Activated CD8-positive, alpha-beta T cell treated with anti-CD3 and anti-CD28 coated beads for 36 hours (primary cell): ENCODE measurements at regions of chr10 and their contacts with region 1.

Region 1: GRCh38 chr10:110746254-110746826 is 102.2 kb downstream of the RBM20 start:
- DNase-seq: peak; percentile 67
- ATAC-seq: peak; percentile 32
- H3K4me3 Mint-ChIP-seq: no peak overlapping the region
- H3K27ac Mint-ChIP-seq: peak overlapping the region; percentile 86
- H3K4me1 Mint-ChIP-seq: peaks cover 74% of the 10 kb centered on the region
- H3K27me3 Mint-ChIP-seq: no peaks in the 10 kb centered on the region
- CTCF ChIP-seq: peak; percentile 97

Region 2: DNA sequence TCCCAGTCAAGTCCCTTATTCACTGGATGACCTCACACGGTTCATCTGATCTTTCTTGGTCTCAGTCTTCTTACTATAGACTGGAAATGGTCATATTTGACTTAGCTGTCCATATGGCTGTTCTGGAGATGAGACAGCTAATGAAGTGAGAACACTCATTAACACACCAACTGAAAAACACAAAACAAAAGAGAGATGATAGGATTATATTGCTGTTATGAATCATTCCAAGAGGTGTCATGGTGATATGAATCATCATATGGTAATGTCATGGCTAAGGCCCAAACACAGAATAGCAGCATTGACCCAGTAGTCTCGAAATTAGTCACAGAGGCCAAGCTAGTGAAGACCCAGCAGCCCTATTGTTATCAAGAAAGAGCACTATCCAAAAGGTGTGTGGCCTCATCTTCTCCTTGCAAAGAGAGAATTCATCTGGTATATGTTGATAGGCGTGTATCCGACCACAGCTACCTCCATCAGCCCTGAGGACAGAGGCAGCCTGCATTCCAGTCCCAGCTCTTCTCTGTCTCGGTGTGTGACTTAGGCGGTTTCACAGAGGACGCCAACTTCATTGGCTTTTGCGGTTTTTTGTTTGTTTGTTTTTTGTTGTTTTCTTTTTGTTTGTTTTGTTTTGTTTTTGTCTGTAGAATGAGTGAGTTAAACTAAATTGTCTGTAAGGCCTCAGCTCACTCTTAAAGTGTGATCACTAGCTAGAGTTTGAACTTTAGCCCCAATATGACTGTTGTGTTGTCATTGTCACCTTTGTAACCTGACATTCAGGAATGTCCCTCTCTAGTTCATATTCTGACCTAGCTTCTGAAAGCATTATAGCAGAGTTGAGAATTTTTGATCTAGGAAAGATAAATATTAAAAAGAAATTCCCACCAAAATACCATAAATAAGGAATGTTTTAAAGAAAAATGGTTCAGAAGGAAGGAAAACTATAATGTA is 28.0 kb after region 1 on chr10:
- CTCF ChIA-PET with region 1: interaction called, 7 read pairs
- POLR2A ChIA-PET with region 1: interaction called, 10 read pairs
- intact Hi-C with region 1: loop called (anchors 1 kb)
- DNase-seq: peak; percentile 78
- ATAC-seq: peak; percentile 91
- H3K4me3 Mint-ChIP-seq: peak overlapping the region; percentile 50
- H3K27ac Mint-ChIP-seq: peak overlapping the region; percentile 96
- H3K4me1 Mint-ChIP-seq: peaks cover 78% of the 10 kb centered on the region
- H3K27me3 Mint-ChIP-seq: no peaks in the 10 kb centered on the region
- CTCF ChIP-seq: no peak

Region 3: GRCh38 chr10:110843031-110843430 is 96.7 kb after region 1 on chr10:
- CTCF ChIA-PET with region 1: interaction called, 11 read pairs
- POLR2A ChIA-PET with region 1: no interaction called
- intact Hi-C with region 1: no loop called
- DNase-seq: peak; percentile 82
- ATAC-seq: peak; percentile 76
- H3K4me3 Mint-ChIP-seq: peak overlapping the region; percentile 44
- H3K27ac Mint-ChIP-seq: peak overlapping the region; percentile 86
- H3K4me1 Mint-ChIP-seq: peaks cover 52% of the 10 kb centered on the region
- H3K27me3 Mint-ChIP-seq: no peaks in the 10 kb centered on the region
- CTCF ChIP-seq: no peak

Region 4: GRCh38 chr10:110893559-110894179 is 147.3 kb after region 1 on chr10:
- CTCF ChIA-PET with region 1: interaction called, 71 read pairs
- POLR2A ChIA-PET with region 1: interaction called, 3 read pairs
- intact Hi-C with region 1: loop called (anchors 1 kb)
- DNase-seq: no peak
- ATAC-seq: peak; percentile 83
- H3K4me3 Mint-ChIP-seq: no peak overlapping the region
- H3K27ac Mint-ChIP-seq: peak overlapping the region; percentile 57
- H3K4me1 Mint-ChIP-seq: peaks cover 61% of the 10 kb centered on the region
- H3K27me3 Mint-ChIP-seq: no peaks in the 10 kb centered on the region
- CTCF ChIP-seq: peak; percentile 68